Left cardiac atrium (tissue), 4 donors: ENCODE measurements at regions of chr6 and their contacts with region 1.

Region 1: DNA sequence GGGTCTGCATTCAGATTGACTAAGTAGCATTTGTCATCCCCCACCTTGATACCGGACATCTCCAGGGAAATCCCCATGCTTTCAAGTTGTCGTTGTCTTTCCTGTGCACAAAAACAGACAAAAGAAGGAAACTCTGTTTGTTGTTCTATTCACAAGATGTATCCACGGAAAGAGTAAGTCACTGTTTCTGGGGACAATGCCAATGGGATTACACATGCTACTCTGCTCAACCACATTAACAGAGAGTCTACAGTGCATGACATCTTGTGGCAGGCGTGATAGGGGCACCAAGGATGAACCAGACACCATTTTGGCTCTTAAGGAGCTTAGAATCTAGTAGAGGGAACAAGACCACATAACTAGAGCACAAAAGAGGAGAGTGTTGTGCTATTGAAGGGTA is 124.4 kb upstream of the NUP153 start:
- DNase-seq: no peak
- ATAC-seq: peak; percentile 72 to 90

Region 2: GRCh38 chr6:17785094-17785787 is 45.9 kb before region 1 on chr6:
- intact Hi-C with region 1: no loop called
- DNase-seq: no peak
- ATAC-seq: no peak

Region 3: GRCh38 chr6:18115356-18115755 is 284.2 kb after region 1 on chr6:
- intact Hi-C with region 1: loop called (anchors 5 kb)
- DNase-seq: no peak
- ATAC-seq: no peak